Activated B cell treated with CpG ODN at 0.5 μM for 24 hours (primary cell): ENCODE measurements at regions of chr10 and their contacts with region 1.

Region 1: DNA sequence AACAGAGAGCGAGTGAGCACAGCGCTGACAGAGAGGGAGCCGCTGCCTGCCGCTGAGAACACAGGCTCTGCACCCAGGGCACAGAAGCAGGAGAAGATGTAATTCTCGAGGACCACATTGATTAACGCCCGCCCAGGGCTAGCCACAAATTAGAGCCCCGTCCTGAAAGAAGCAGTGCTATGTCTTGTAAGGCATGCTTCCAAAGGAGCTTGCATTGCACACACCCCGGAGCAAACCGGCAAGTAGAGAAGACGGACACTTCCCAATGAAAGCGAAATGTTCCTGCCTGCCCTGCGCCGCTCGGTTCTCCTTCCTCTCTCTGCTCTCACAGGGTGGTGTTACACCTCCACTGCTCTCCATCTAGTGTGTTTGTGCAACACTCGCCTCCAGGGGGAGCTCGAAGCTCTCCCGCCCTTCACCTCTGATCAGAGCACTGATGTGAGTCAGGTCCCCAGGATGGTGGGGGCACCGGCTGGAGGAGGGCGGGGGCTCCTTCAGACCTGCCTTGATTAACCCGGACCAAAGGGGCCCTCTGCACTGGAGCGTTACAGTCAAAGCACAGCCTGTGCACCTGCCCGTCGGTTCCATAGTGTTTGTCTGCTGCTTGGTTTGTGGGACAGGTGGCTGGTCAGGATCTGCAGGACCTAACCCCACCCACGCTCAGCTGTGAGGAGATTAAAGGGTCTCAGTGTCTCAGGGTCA is 316.5 kb downstream of the ADARB2 start:
- DNase-seq: peak; percentile 71
- ATAC-seq: peak; percentile 85
- H3K4me3 Mint-ChIP-seq: peak overlapping the region; percentile 65
- H3K27ac Mint-ChIP-seq: peak overlapping the region; percentile 47
- H3K4me1 Mint-ChIP-seq: peaks cover 60% of the 10 kb centered on the region
- H3K27me3 Mint-ChIP-seq: no peaks in the 10 kb centered on the region
- CTCF ChIP-seq: peak; percentile 98

Region 2: DNA sequence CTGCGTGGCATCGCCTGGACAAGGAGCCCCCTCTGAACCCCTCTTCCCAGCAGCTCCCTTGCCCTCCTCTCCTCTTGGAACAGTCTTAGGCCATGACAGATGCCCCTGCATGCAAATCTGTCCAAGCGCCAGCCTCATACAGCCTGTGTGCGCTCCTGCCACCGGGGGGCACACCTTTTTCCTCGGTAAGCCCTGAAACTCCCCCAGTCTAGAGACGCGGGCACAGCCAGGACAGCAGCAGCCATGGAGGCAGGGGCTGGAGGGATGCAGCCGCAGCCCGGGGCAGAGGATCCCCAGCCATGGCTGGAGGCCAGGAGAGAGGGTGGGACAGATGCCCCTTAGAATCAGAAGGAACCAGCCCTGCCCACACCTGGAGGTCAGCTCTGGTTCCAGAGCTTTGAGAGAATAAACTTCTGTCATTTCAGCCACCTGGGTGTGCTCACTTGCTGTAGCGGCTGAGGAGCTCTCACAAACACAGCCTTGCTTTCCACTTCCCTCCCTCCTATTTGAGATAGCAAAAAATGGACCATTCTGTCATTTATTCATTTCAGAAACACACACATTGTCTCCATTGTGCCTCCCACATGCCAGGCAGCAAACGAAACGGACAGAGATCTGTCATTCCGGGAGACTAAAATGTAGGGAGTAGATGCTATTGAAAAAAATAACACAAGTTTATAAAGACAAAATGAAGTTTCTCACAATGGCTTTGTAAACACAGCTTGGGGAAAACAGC is 123.1 kb before region 1 on chr10:
- CTCF ChIA-PET with region 1: no interaction called
- POLR2A ChIA-PET with region 1: no interaction called
- intact Hi-C with region 1: no loop called
- DNase-seq: no peak
- ATAC-seq: no peak
- H3K4me3 Mint-ChIP-seq: no peak overlapping the region
- H3K27ac Mint-ChIP-seq: no peak overlapping the region
- H3K4me1 Mint-ChIP-seq: no peaks in the 10 kb centered on the region
- H3K27me3 Mint-ChIP-seq: peaks cover 19% of the 10 kb centered on the region
- CTCF ChIP-seq: no peak

Region 3: DNA sequence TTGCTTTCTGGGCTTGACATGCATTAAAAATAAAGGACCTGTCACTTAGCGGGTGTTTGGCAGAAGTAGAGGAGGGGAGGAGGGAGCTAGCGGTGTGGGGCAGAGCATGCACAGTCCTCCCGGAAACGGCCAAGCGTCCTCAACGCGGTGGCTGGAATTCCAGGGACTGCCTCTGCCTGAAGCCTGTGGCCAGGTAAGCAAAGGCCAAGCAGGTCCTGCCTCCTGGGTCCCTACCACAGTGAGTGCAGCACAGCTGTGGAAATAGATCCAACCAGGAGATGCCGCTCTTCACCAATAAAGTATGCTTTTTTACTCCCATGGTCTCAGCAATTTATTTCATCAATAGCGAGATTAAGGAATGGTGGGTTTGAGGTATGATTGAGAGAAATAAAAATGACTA is 41.2 kb before region 1 on chr10:
- CTCF ChIA-PET with region 1: no interaction called
- POLR2A ChIA-PET with region 1: no interaction called
- intact Hi-C with region 1: no loop called
- DNase-seq: no peak
- ATAC-seq: no peak
- H3K4me3 Mint-ChIP-seq: no peak overlapping the region
- H3K27ac Mint-ChIP-seq: no peak overlapping the region
- H3K4me1 Mint-ChIP-seq: no peaks in the 10 kb centered on the region
- H3K27me3 Mint-ChIP-seq: peaks cover 35% of the 10 kb centered on the region
- CTCF ChIP-seq: no peak

Region 4: GRCh38 chr10:1408719-1409367 is 12.0 kb before region 1 on chr10:
- CTCF ChIA-PET with region 1: no interaction called
- POLR2A ChIA-PET with region 1: no interaction called
- intact Hi-C with region 1: no loop called
- DNase-seq: no peak
- ATAC-seq: no peak
- H3K4me3 Mint-ChIP-seq: no peak overlapping the region
- H3K27ac Mint-ChIP-seq: no peak overlapping the region
- H3K4me1 Mint-ChIP-seq: peaks cover 14% of the 10 kb centered on the region
- H3K27me3 Mint-ChIP-seq: peaks cover 40% of the 10 kb centered on the region
- CTCF ChIP-seq: no peak

Region 5: DNA sequence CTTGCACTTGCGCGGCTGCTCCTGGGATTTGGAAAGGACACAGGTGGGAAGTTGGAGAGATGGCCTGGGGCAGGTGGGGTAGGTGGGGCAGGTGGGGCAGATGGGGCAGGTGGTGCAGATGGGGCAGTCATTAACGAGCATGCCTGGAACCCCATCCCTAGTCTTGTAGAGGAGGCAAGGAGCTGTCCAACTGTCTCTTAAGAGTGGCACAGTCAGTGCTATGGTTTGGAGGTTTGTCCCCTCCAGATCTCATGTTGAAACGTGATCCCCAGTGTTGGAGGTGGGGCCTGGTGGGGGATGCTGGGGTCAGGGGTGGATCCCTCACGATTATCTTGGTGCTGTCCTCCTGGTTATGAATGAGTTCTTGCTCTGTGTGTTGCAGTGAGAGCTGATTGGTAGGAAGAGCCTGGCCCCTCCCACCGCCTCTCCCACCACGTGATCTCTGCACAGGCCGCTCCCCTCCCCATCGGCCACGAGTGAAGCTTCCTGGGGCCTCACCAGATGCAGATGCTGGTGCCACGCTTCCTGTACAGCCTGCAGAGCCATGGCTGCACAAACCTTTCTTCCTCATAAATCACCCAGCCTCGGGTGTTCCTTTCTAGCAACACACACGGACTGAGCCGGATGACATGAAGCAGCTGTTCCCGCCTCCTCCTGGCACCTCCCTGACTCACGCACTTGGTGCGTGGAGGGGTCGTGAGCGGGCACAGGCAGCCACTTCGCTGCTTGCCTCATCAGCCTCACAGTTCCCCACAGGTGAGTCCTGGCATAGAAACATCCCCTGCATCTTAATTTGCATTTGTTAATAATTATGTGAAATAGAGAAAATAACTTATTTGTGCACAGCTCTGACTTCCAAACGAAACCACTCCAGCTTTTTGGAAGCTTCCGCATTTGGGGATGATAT is 105.6 kb after region 1 on chr10:
- CTCF ChIA-PET with region 1: no interaction called
- POLR2A ChIA-PET with region 1: no interaction called
- intact Hi-C with region 1: no loop called
- DNase-seq: no peak
- ATAC-seq: no peak
- H3K4me3 Mint-ChIP-seq: no peak overlapping the region
- H3K27ac Mint-ChIP-seq: no peak overlapping the region
- H3K4me1 Mint-ChIP-seq: peaks cover 16% of the 10 kb centered on the region
- H3K27me3 Mint-ChIP-seq: peaks cover 16% of the 10 kb centered on the region
- CTCF ChIP-seq: no peak

Region 6: GRCh38 chr10:1643161-1643907 is 222.5 kb after region 1 on chr10:
- CTCF ChIA-PET with region 1: interaction called, 3 read pairs
- POLR2A ChIA-PET with region 1: no interaction called
- intact Hi-C with region 1: loop called (anchors 2 kb)
- DNase-seq: no peak
- ATAC-seq: peak; percentile 87
- H3K4me3 Mint-ChIP-seq: peak overlapping the region; percentile 17
- H3K27ac Mint-ChIP-seq: peak overlapping the region; percentile 14
- H3K4me1 Mint-ChIP-seq: peaks cover 10% of the 10 kb centered on the region
- H3K27me3 Mint-ChIP-seq: peaks cover 12% of the 10 kb centered on the region
- CTCF ChIP-seq: no peak

Region 7: GRCh38 chr10:1754506-1755153 is 333.8 kb after region 1 on chr10:
- CTCF ChIA-PET with region 1: interaction called, 5 read pairs
- POLR2A ChIA-PET with region 1: no interaction called
- intact Hi-C with region 1: loop called (anchors 5 kb)
- DNase-seq: no peak
- ATAC-seq: no peak
- H3K4me3 Mint-ChIP-seq: no peak overlapping the region
- H3K27ac Mint-ChIP-seq: no peak overlapping the region
- H3K4me1 Mint-ChIP-seq: no peaks in the 10 kb centered on the region
- H3K27me3 Mint-ChIP-seq: peaks cover 13% of the 10 kb centered on the region
- CTCF ChIP-seq: no peak

Region 8: GRCh38 chr10:2978111-2978510 is 1557.3 kb after region 1 on chr10:
- CTCF ChIA-PET with region 1: no interaction called
- POLR2A ChIA-PET with region 1: no interaction called
- intact Hi-C with region 1: loop called (anchors 2 kb)
- DNase-seq: no peak
- ATAC-seq: no peak
- H3K4me3 Mint-ChIP-seq: no peak overlapping the region
- H3K27ac Mint-ChIP-seq: peak overlapping the region; percentile 9
- H3K4me1 Mint-ChIP-seq: peaks cover 37% of the 10 kb centered on the region
- H3K27me3 Mint-ChIP-seq: no peaks in the 10 kb centered on the region
- CTCF ChIP-seq: no peak